ENCODE measurements at regions of chr11 and their contacts with region 1.

Region 1: DNA sequence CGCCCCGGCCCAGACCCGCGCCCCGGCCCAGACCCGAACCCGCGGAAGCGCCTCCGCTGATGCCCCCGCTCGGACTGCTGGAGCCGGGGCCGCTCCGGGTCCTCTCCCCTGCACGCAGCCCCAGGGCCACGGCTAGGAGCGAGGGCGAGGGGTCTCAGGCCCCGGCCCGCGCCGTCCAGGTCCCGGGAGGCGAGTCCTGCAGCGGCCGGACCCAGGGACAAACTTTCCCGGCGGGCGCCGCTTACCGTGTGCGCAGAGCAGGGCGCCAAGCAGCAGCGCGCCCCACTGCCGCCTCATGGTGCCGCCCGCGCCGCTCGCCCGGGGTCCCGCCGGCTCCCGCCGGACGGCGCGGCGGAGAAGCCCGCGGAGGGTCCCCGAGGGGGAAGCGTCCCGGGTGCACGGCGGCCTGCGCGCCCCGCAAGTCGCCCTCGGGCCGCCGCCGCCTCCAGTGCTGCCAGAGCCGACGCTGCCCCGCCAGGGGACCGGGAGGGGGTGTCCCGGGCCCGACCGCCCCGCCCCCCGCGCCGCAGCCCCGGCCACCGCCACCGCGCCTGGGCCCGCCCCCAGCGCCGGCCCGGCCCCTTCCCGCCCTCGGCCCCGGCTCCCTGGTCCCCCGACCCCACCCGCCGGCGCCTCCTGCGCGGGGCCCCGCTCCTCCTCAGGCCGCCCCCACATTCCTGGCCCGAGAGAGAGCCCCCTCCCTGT is at the start of gene LRP4:
- DNase-seq: peak in 7 of 14 experiments; percentile 7 to 65 (median 35)
- ATAC-seq: peak; percentile 41
- H3K4me3 ChIP-seq: peak within 1 kb of the TSS; percentile 38
- H3K4me3 Mint-ChIP-seq: peak within 1 kb of the TSS; percentile 85
- H3K27ac ChIP-seq: no peak within 1 kb of the TSS
- H3K27ac Mint-ChIP-seq: no peak within 1 kb of the TSS
- H3K4me1 ChIP-seq: peaks cover 28% of the 10 kb centered on the region
- H3K4me1 Mint-ChIP-seq: peaks cover 26% of the 10 kb centered on the region
- H3K27me3 ChIP-seq: peaks cover 53 to 59% of the 10 kb centered on the region in 2 experiments
- H3K27me3 Mint-ChIP-seq: peaks cover 73% of the 10 kb centered on the region
- CTCF ChIP-seq: no peak
- total RNA-seq, gene LRP4: not detected

Region 2: DNA sequence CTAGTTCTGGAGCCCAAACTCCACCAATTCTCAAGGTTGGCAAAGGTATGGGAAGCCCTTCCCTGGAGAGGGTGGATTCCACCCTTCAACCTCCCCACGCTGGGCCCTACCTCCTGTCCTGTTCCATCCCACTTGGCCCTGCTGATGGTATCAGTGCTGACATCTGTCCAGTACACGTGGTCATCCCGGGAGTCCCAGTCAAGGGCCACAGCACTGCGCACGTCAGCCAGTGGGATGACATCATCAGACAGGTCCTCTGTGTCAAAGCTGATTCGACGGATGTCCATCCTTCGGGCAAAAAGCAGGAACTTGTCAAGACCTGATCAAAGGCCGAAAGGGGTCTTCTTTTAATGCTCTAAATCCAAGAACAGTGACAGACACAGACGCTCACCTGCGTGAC is 32.0 kb before region 1 on chr11:
- CTCF ChIA-PET with region 1: no interaction called
- POLR2A ChIA-PET with region 1: no interaction called
- intact Hi-C with region 1: no loop called
- DNase-seq: no peak
- ATAC-seq: no peak
- H3K4me3 ChIP-seq: no peak overlapping the region
- H3K4me3 Mint-ChIP-seq: no peak overlapping the region
- H3K27ac ChIP-seq: no peak overlapping the region
- H3K27ac Mint-ChIP-seq: no peak overlapping the region
- H3K4me1 ChIP-seq: no peaks in the 10 kb centered on the region
- H3K4me1 Mint-ChIP-seq: no peaks in the 10 kb centered on the region
- H3K27me3 ChIP-seq: peaks cover 0 to 4% of the 10 kb centered on the region in 2 experiments
- H3K27me3 Mint-ChIP-seq: peaks cover 16% of the 10 kb centered on the region
- CTCF ChIP-seq: no peak

Region 3: DNA sequence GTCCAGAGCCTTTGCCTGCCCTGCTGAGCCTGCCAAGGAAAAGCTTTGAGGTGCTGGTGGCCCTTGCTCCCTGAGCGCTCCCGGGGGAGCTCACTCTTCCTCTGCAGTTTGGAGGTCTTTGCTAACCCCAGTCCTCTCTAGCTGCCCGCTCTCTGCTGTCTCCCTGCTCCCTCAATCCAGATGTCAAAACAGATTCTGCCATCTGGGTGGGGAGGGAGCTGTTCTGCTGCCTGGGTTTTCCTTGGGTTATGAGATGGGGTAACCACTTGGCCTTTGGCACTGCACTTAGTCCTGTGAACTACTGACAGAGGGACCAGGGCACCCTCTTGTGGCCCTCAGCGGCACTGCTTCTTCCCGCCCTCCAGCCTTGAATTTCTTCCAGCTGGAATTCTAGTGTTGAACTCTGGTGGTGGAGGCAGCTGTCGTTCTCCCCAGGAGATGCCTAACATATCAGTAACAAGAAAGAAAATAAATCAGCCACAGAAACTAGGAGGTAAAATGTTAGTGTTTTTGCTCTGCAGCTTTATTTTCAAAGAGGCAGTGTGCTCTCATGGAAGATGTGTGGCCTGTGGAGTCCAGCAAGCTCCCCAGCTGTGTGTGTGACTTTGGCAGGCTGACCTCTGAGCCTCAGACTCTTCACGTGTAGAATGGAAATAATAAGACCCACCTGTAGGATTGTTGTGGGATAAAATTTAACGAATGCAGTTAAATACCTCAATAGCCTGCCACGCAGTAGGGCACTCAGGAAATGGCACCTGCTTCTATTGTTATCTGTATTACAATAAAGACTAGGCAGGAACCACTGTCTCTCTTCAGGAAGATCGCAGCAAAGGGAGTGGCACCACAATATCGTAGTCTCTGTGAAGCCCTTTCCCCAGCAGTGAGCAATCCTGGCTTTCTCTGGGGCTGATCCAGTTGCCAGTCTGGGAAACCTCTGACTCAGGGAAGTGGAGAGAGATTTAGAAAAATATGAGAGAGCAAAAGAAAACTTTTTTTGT is 235.0 kb after region 1 on chr11:
- CTCF ChIA-PET with region 1: interaction called, 10 read pairs
- POLR2A ChIA-PET with region 1: no interaction called
- intact Hi-C with region 1: loop called in 1 of 2 experiments (anchors 1 kb)
- DNase-seq: peak; percentile 29 to 72 (median 42)
- ATAC-seq: peak; percentile 63
- H3K4me3 ChIP-seq: no peak overlapping the region
- H3K4me3 Mint-ChIP-seq: peak overlapping the region; percentile 74
- H3K27ac ChIP-seq: peak overlapping the region in 1 of 2 donors; percentile 27
- H3K27ac Mint-ChIP-seq: peak overlapping the region; percentile 86
- H3K4me1 ChIP-seq: peaks cover 37% of the 10 kb centered on the region
- H3K4me1 Mint-ChIP-seq: peaks cover 33% of the 10 kb centered on the region
- H3K27me3 ChIP-seq: no peaks in the 10 kb centered on the region
- H3K27me3 Mint-ChIP-seq: no peaks in the 10 kb centered on the region
- CTCF ChIP-seq: peak; percentile 94

Measured in CD4-positive, alpha-beta T cell (primary cell).